Gastrocnemius medialis (tissue), 4 donors: ENCODE measurements at regions of chr1 and their contacts with region 1.

Region 1: DNA sequence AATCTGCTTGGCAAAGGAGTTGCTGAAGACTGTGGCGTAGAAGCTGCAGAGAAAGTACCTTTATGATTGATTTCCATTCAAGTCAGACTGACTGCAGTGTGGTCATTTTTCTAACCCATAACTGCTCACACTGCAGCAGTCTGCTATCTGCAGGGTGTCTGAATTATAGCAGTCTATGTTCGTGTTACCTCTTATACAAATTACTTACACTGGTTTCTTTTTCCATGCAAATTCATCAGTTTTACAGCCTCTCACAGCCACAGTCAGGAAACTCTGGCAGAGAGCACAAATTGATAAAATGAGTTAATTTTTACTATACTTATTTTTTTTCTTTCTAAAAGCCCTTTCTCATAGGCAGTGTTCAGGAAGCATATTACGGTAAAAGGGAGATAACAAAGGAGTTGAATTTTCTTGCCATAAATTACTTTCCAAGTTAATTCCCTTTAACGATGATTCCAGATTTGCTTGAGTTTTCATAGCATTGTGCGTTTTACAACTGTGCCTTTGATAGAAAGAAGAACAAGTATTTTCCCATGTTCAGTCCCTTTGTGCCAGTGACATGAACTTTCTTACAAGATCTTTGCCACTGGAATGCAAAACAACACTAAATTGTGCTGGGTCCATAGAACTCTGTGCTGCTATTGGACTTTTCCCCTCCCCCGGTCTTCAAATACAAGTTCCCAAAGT is 261.5 kb downstream of the NFIA start:
- DNase-seq: no peak
- ATAC-seq: no peak
- H3K4me3 ChIP-seq: no peak overlapping the region
- H3K27ac ChIP-seq: no peak overlapping the region
- H3K4me1 ChIP-seq: peaks cover 24 to 32% of the 10 kb centered on the region in 2 donors
- H3K27me3 ChIP-seq: no peaks in the 10 kb centered on the region
- CTCF ChIP-seq: no peak
- POLR2A ChIP-seq: no peak

Region 2: GRCh38 chr1:61397935-61398334 is 54.1 kb after region 1 on chr1:
- in situ Hi-C with region 1: loop called in 1 of 4 experiments (anchors 10 kb)
- intact Hi-C with region 1: no loop called
- DNase-seq: peak; percentile 29 to 40
- ATAC-seq: peak; percentile 64 to 87
- H3K4me3 ChIP-seq: no peak overlapping the region
- H3K27ac ChIP-seq: peak overlapping the region; percentile 35 to 66 (median 62)
- H3K4me1 ChIP-seq: peaks cover 41 to 43% of the 10 kb centered on the region in 2 donors
- H3K27me3 ChIP-seq: no peaks in the 10 kb centered on the region
- CTCF ChIP-seq: no peak
- POLR2A ChIP-seq: no peak

Region 3: GRCh38 chr1:61436016-61436415 is 92.1 kb after region 1 on chr1:
- in situ Hi-C with region 1: no loop called
- intact Hi-C with region 1: no loop called
- DNase-seq: no peak
- ATAC-seq: peak in 1 of 2 donors; percentile 58
- H3K4me3 ChIP-seq: no peak overlapping the region
- H3K27ac ChIP-seq: peak overlapping the region in 3 of 4 donors; percentile 44 to 61 (median 55)
- H3K4me1 ChIP-seq: peaks cover 0 to 18% of the 10 kb centered on the region in 2 donors
- H3K27me3 ChIP-seq: no peaks in the 10 kb centered on the region
- CTCF ChIP-seq: peak in 2 of 5 experiments; percentile 7 to 17
- POLR2A ChIP-seq: no peak